AG04449 (cell line): ENCODE measurements at regions of chr2 and their contacts with region 1.

Region 1: GRCh38 chr2:171703574-171704347 is 16.5 kb downstream of the DYNC1I2 start:
- DNase-seq: no peak
- H3K4me3 ChIP-seq: no peak overlapping the region
- CTCF ChIP-seq: peak; percentile 28

Region 2: GRCh38 chr2:171652416-171652785 is 51.4 kb before region 1 on chr2:
- CTCF ChIA-PET with region 1: no interaction called
- POLR2A ChIA-PET with region 1: no interaction called
- DNase-seq: no peak
- H3K4me3 ChIP-seq: no peak overlapping the region
- CTCF ChIP-seq: no peak

Region 3: DNA sequence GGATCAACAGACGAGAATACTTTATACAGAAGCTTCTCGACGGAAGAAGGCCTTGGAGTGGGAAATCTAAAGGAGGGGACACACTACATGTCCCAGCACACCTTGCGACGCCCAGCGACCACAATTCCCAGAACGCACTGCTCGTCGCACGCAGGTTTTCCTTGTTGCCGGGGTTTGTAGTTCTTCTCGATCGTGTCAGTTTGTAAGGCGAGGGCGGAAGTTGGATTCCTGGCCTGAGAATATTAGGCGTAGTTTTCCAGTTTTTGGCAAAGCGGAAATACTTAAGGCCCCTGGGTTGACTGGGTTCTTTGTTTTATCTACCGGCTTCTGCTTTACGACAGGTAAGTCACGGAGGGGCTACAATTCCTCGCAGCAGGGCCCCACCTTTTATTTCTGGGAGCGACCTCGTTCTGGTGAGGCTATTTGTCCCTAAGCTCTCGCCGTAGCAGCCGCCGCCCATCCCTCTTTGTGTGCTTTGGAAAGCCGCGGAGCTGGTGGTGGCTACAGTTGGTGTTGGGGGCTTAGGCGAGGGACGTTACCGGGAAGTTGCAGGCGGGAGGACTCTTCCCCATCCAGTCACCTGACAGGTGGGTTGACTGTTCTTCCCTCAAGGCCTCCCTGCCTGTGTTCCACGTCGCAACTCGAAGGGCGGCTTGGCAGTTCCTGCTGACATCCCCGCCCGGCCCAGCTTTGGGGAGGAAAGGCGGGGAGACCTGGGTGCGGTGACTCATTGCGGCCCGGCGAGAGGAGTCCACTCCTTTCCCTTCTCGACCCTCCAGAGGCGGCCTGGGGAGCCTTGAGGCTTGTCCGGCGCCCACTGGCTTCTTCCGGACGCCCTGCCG is 16.3 kb before region 1 on chr2 and contains the start of gene DYNC1I2:
- CTCF ChIA-PET with region 1: interaction called, 54 read pairs
- POLR2A ChIA-PET with region 1: no interaction called
- DNase-seq: peak; percentile 79
- H3K4me3 ChIP-seq: peak within 1 kb of the TSS; percentile 86
- CTCF ChIP-seq: no peak

Region 4: DNA sequence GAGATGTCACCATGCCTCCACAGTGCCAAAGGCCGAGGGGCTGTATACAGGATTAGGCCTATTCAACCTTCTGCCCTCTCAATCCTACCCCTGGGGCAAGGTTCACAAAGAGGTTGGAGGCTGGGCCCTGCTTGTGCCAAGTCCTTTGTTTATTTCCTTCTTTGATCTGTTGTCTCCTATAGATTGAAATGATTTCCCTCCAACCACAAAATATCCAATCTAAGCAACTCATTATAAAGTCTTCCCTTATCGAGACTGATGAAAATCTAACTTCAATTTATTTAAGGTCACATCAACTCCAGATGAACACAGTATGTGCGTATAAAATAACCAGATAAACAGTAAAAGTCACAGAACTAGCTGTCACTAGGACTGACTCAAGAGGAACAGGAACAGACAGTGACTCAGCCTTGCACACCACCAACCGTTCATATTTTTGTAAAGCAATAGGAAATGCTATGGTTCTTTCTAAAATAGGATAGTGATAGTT is 94.5 kb after region 1 on chr2:
- CTCF ChIA-PET with region 1: interaction called, 15 read pairs
- POLR2A ChIA-PET with region 1: no interaction called
- DNase-seq: peak; percentile 28
- H3K4me3 ChIP-seq: no peak overlapping the region
- CTCF ChIP-seq: no peak